ENCODE measurements at regions of chr9 and their contacts with region 1.

Region 1: DNA sequence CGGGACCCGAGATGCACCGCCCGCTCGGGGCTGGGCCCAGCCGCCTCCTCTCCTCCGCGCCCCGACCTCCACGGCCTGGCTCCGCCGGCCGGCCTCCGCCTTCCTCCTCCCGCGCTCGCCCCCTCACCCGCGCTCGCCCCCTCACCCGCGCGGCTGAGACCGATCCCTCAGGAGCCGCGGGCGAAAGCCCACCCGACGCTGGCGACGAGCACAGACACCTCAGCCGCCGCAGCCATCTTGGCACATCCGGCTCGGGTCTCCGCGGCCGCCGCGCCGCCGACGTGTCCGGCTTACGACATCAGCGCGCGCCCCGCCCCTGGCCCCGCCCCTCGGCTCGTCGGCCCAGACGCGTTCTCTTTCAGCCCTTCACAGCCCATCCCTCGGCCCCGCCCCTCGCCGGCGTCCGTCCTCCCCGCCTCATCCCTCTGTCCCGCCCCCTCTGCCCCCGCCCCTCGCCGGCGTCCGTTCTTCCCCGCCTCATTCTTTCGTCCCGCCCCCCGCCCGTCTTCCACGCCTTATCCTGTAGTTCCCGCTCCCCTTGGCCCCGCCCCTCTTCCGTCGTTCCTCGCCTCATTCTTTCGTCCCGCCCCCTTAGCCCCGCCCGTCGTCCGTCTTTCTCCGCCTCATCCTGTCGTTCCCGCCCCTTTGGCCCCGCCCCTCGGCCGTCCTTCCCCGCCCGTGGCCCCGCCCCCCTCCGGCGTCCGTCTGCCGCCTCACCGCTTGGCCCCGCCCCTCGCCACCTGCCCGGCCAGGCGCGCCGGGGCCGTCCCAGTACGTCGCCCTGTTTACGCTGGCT is at the start of gene SEC16A:
- DNase-seq: peak; percentile 83
- H3K4me3 ChIP-seq: peak within 1 kb of the TSS; percentile 78
- CTCF ChIP-seq: no peak

Region 2: GRCh38 chr9:136264031-136264430 is 219.0 kb before region 1 on chr9:
- CTCF ChIA-PET with region 1: no interaction called
- POLR2A ChIA-PET with region 1: no interaction called
- DNase-seq: no peak
- H3K4me3 ChIP-seq: no peak overlapping the region
- CTCF ChIP-seq: no peak

Region 3: DNA sequence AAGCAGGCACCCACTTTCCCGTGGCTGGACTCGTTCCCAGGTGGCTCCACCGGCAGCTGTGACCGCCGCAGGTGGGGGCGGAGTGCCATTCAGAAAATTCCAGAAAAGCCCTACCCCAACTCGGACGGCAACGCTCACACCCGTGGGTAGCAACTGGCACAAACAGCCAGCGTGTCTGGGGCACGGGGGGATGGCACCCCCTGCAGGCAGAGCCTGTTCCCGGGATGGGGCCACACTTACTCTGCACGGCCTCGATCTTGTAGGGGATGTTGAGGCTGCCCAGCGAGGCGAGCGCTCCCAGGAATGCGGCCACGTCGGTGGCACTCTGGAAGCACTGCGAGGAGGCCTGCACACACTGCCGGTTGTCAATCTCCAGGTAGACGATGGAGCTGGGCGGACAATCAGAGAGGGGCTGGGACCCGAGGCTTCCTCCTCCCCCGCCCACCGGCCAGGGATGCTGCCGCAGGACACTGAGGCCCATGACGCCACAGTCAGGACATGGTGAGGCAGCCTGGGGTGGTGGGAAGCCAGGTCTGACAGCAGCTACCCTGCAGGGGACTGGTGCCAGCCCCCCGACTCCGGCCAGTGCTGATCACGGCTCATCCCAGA is 20.1 kb after region 1 on chr9:
- CTCF ChIA-PET with region 1: interaction called, 131 read pairs
- POLR2A ChIA-PET with region 1: no interaction called
- DNase-seq: no peak
- H3K4me3 ChIP-seq: no peak overlapping the region
- CTCF ChIP-seq: no peak

Region 4: DNA sequence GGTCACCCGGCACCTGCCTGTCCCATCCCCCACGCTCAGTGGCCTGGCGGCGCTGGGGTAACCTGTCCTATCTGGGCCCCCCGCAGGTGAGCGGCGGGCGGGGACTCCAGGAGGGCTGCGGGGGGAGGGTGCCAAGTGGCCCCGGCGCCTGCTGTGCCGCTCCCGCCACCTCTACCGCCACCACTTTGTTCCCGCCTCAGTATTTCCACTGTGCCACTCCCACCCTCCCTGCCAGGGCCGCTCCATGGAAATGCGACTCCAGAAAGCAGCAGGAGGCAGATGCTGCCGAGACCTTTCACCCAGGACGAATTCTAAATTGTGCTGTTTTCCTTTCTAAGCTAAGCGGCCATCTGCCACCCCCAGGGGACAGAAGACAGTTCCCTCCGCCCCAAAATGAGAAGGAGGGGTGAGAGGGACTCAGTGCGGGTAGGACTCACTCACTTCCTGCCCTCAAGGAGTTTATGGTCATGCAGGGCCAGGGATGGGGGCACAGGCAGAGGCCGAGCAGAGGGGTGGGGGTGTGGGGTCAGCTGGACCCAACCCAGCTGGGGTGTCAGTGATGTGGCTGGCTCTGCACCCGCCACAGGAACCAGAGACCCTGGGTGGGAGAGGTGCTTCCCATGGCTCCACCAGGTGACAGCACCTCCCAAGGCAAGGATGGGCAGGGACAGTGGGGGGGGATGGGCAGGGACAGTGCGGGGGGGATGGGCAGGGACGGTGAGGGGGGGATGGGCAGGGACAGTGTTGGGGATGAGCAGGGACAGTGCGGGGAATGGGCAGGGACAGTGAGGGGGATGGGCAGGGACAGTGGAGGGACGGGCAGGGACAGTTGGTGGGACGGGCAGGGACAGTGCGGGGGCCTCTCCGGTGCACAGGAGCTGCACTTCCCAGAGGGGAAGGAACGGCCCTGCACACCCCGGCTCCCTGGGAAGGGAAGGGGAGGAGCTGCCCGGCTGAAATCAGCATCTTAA is 45.0 kb after region 1 on chr9:
- CTCF ChIA-PET with region 1: interaction called, 12 read pairs
- POLR2A ChIA-PET with region 1: no interaction called
- DNase-seq: no peak
- H3K4me3 ChIP-seq: no peak overlapping the region
- CTCF ChIP-seq: no peak

Region 5: GRCh38 chr9:136539427-136540421 is 56.7 kb after region 1 on chr9:
- CTCF ChIA-PET with region 1: interaction called, 33 read pairs
- POLR2A ChIA-PET with region 1: no interaction called
- DNase-seq: no peak
- H3K4me3 ChIP-seq: no peak overlapping the region
- CTCF ChIP-seq: no peak

Region 6: GRCh38 chr9:136619742-136620440 is 136.9 kb after region 1 on chr9:
- CTCF ChIA-PET with region 1: interaction called, 674 read pairs
- POLR2A ChIA-PET with region 1: interaction called, 7 read pairs
- DNase-seq: no peak
- H3K4me3 ChIP-seq: no peak overlapping the region
- CTCF ChIP-seq: no peak

Region 7: DNA sequence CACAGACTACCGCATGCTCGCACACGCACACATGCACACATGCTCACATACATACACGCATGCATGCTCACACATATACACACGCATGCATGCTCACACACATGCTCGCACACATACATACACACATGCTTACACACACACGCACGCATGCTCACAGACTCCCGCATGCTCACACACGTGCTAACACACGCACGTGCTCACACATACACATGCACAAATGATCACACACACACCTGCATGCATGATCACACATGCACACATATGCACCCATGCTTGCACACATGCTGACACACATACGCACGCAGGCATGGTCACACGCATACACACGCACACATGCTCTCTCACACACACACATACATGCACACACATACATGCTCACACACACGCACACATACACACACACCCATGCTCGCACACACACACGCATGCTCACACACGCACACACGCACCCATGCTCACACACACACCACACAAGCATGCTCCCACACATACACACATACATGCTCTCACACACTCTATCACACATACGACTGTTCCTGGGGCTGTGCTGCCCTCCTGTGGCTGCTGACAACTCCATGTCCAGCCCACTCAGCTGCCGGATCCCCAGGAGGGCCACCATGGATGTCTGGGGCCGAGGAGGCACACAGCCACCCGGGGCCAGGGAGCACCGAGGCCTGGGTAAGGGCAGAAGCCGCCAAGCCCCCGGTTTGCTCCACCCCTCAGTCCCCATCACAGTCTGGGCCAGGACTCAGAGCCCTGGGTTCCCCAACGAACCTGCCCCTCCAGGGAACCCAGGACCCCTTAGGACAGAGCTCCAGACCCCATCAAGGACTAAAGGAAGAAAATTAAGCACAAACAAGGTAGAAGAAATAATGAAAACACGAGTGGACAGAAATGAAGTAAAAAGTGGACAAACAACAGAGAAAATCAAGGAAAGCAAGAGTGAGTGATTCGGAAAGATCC is 148.3 kb after region 1 on chr9:
- CTCF ChIA-PET with region 1: interaction called, 674 read pairs
- POLR2A ChIA-PET with region 1: no interaction called
- DNase-seq: no peak
- H3K4me3 ChIP-seq: no peak overlapping the region
- CTCF ChIP-seq: peak; percentile 93

Region 8: GRCh38 chr9:136644598-136645351 is 161.8 kb after region 1 on chr9:
- CTCF ChIA-PET with region 1: interaction called, 371 read pairs
- POLR2A ChIA-PET with region 1: no interaction called
- DNase-seq: no peak
- H3K4me3 ChIP-seq: no peak overlapping the region
- CTCF ChIP-seq: peak; percentile 93

Measured in AG04449 (cell line).